Activated CD4-positive, alpha-beta T cell treated with anti-CD3 and anti-CD28 coated beads for 36 hours (primary cell): ENCODE measurements at regions of chr7 and their contacts with region 1.

Region 1: GRCh38 chr7:154984601-154985188 is 18.2 kb downstream of the PAXIP1 start:
- DNase-seq: no peak
- ATAC-seq: no peak
- H3K4me3 Mint-ChIP-seq: no peak overlapping the region
- H3K27ac Mint-ChIP-seq: no peak overlapping the region
- H3K4me1 Mint-ChIP-seq: peaks cover 2% of the 10 kb centered on the region
- H3K27me3 Mint-ChIP-seq: no peaks in the 10 kb centered on the region

Region 2: DNA sequence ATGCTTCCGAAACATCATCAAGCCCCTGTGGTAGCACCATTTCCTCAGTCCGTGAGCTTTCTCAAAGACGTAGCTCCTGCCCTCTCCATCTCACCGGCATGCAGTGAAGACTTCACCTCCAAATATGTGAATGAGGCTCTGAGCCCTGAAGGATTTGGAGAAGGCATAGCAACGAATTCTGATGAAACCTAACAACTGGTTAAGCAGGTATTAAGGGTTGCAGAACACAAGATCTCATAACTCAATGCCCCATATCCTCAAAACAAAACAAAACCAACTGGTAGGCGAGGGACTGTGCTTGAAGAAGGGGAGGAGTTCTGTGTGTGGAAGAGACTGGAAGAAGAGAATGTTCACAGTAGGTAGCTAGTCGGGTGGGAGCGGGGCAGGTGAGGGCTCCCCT is 126.1 kb after region 1 on chr7:
- CTCF ChIA-PET with region 1: no interaction called
- POLR2A ChIA-PET with region 1: interaction called, 10 read pairs
- intact Hi-C with region 1: no loop called
- DNase-seq: no peak
- ATAC-seq: no peak
- H3K4me3 Mint-ChIP-seq: no peak overlapping the region
- H3K27ac Mint-ChIP-seq: no peak overlapping the region
- H3K4me1 Mint-ChIP-seq: no peaks in the 10 kb centered on the region
- H3K27me3 Mint-ChIP-seq: peaks cover 23% of the 10 kb centered on the region

Region 3: GRCh38 chr7:155352086-155352752 is 367.5 kb after region 1 on chr7:
- CTCF ChIA-PET with region 1: no interaction called
- POLR2A ChIA-PET with region 1: no interaction called
- intact Hi-C with region 1: no loop called
- DNase-seq: no peak
- ATAC-seq: no peak
- H3K4me3 Mint-ChIP-seq: no peak overlapping the region
- H3K27ac Mint-ChIP-seq: no peak overlapping the region
- H3K4me1 Mint-ChIP-seq: no peaks in the 10 kb centered on the region
- H3K27me3 Mint-ChIP-seq: peaks cover 19% of the 10 kb centered on the region